ENCODE measurements at regions of chr17 and their contacts with region 1.

Region 1: GRCh38 chr17:18889658-18890057 is 31.7 kb downstream of the PRPSAP2 start:
- DNase-seq: no peak
- ATAC-seq: no peak
- H3K4me3 ChIP-seq: no peak overlapping the region
- H3K4me3 Mint-ChIP-seq: no peak overlapping the region
- H3K27ac ChIP-seq: no peak overlapping the region
- H3K27ac Mint-ChIP-seq: no peak overlapping the region
- H3K4me1 ChIP-seq: peaks cover 2% of the 10 kb centered on the region
- H3K4me1 Mint-ChIP-seq: peaks cover 17% of the 10 kb centered on the region
- H3K27me3 ChIP-seq: no peaks in the 10 kb centered on the region
- H3K27me3 Mint-ChIP-seq: no peaks in the 10 kb centered on the region
- CTCF ChIP-seq: no peak

Region 2: DNA sequence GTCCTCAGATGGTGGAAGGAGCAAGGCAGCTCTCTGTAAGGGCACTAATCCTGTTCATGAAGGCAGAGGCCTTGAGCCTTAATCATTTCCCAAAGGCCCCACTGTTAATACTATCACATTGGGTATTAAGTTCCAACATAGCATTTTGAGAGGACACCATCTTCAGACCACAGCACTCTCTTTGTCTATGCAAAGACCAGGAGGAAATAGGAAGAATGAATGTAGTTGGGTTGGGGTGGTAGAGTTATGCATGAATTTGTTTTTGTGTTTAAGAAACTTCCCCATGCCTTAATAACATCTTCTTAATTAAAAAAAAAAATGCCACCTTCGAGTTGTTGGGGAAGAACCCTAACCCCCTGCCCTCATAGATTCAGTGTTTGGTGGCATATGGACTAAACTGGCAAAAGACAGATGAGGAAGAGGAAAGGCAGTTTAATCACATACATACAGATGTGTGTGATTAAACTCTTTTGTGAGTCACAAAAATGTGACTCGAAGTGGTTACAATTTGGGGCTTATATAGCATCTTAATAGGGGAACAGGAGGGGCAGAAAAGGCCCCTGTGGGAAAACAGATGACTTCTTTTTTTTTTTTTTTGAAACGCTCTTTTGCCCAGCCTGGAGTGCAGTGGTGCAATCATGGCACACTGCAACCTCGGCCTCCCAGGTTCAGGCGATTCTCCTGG is 27.3 kb after region 1 on chr17:
- CTCF ChIA-PET with region 1: no interaction called
- POLR2A ChIA-PET with region 1: no interaction called
- intact Hi-C with region 1: no loop called
- DNase-seq: no peak
- ATAC-seq: no peak
- H3K4me3 ChIP-seq: no peak overlapping the region
- H3K4me3 Mint-ChIP-seq: no peak overlapping the region
- H3K27ac ChIP-seq: no peak overlapping the region
- H3K27ac Mint-ChIP-seq: peak overlapping the region; percentile 40
- H3K4me1 ChIP-seq: peaks cover 27% of the 10 kb centered on the region
- H3K4me1 Mint-ChIP-seq: peaks cover 53% of the 10 kb centered on the region
- H3K27me3 ChIP-seq: no peaks in the 10 kb centered on the region
- H3K27me3 Mint-ChIP-seq: no peaks in the 10 kb centered on the region
- CTCF ChIP-seq: no peak

Region 3: DNA sequence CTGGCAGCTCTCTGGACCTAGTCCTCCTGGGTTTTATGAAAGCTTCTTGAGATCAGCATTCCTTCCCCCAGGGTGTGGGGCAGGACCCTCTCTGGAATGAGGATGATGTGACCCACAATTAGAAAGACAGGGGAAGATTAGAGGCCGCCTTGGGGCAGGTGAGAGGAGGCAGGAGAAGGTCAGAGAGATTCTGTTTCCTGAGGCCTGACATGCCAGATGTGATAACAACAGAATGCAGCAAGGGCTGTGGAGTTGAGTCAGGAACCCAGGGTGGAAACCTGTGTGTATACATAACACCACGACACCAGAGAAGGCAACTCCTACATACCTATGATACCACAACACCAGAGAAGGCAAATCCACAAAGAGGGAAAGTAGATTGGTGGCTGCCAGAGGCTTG is 56.9 kb after region 1 on chr17:
- CTCF ChIA-PET with region 1: no interaction called
- POLR2A ChIA-PET with region 1: no interaction called
- intact Hi-C with region 1: no loop called
- DNase-seq: no peak
- ATAC-seq: no peak
- H3K4me3 ChIP-seq: no peak overlapping the region
- H3K4me3 Mint-ChIP-seq: no peak overlapping the region
- H3K27ac ChIP-seq: no peak overlapping the region
- H3K27ac Mint-ChIP-seq: no peak overlapping the region
- H3K4me1 ChIP-seq: peaks cover 4% of the 10 kb centered on the region
- H3K4me1 Mint-ChIP-seq: peaks cover 8% of the 10 kb centered on the region
- H3K27me3 ChIP-seq: no peaks in the 10 kb centered on the region
- H3K27me3 Mint-ChIP-seq: no peaks in the 10 kb centered on the region
- CTCF ChIP-seq: no peak

Region 4: GRCh38 chr17:18960803-18961511 is 71.3 kb after region 1 on chr17:
- CTCF ChIA-PET with region 1: no interaction called
- POLR2A ChIA-PET with region 1: interaction called, 3 read pairs
- intact Hi-C with region 1: loop called in 1 of 2 experiments (anchors 2 kb)
- DNase-seq: peak; percentile 39 to 89 (median 70)
- ATAC-seq: peak; percentile 73
- H3K4me3 ChIP-seq: no peak overlapping the region
- H3K4me3 Mint-ChIP-seq: no peak overlapping the region
- H3K27ac ChIP-seq: no peak overlapping the region
- H3K27ac Mint-ChIP-seq: no peak overlapping the region
- H3K4me1 ChIP-seq: peaks cover 29% of the 10 kb centered on the region
- H3K4me1 Mint-ChIP-seq: peaks cover 23% of the 10 kb centered on the region
- H3K27me3 ChIP-seq: no peaks in the 10 kb centered on the region
- H3K27me3 Mint-ChIP-seq: no peaks in the 10 kb centered on the region
- CTCF ChIP-seq: peak; percentile 98